AG04450 (cell line): ENCODE measurements at regions of chr3 and their contacts with region 1.

Region 1: GRCh38 chr3:190224863-190225692 is 97.2 kb downstream of the CLDN1 start:
- DNase-seq: no peak
- H3K4me3 ChIP-seq: no peak overlapping the region
- H3K27ac ChIP-seq: no peak overlapping the region
- H3K27me3 ChIP-seq: no peaks in the 10 kb centered on the region
- CTCF ChIP-seq: peak; percentile 55

Region 2: GRCh38 chr3:189967254-189967865 is 257.7 kb before region 1 on chr3:
- CTCF ChIA-PET with region 1: interaction called, 46 read pairs
- POLR2A ChIA-PET with region 1: no interaction called
- DNase-seq: peak; percentile 21
- H3K4me3 ChIP-seq: no peak overlapping the region
- H3K27ac ChIP-seq: no peak overlapping the region
- H3K27me3 ChIP-seq: no peaks in the 10 kb centered on the region
- CTCF ChIP-seq: peak; percentile 85

Region 3: DNA sequence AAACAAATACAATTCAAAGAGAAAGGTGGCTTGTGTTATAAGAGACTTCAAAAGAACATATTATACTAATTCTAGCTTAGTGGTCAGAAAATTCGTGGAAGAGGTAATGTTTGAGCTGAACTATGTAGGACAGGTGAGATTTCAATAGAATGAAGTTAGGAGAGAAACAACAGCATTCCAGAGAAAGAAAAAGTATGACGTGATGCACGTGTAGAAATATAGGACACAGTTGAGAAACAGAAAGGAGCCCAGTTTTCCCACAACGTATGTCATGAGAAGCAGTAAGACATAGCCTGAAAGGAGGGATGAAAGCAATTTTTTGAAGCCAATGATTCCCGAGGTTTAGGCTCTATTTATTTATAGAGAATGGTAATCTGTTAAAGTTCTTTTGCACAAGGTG is 85.7 kb before region 1 on chr3:
- CTCF ChIA-PET with region 1: no interaction called
- POLR2A ChIA-PET with region 1: no interaction called
- DNase-seq: no peak
- H3K4me3 ChIP-seq: no peak overlapping the region
- H3K27ac ChIP-seq: no peak overlapping the region
- H3K27me3 ChIP-seq: no peaks in the 10 kb centered on the region
- CTCF ChIP-seq: no peak

Region 4: DNA sequence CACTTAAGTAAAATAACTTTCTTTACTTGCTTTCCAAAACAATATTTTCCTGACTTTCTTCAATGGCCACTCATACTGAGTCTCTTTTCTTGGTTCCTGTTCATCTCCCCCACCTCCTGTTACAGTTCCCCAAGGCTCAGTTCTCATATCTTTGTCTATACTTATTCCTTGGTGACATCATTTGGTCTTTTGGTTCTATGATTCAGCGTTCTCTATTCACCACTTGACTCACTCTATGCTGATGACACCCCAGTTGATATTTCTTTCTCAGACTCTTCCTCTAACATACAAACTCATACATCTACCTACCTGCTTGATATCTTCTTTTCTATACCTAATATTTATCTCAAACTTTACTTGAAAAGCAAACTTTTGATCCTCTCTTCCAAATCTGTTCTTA is 19.3 kb before region 1 on chr3:
- CTCF ChIA-PET with region 1: interaction called, 19 read pairs
- POLR2A ChIA-PET with region 1: no interaction called
- DNase-seq: peak; percentile 27
- H3K4me3 ChIP-seq: no peak overlapping the region
- H3K27ac ChIP-seq: no peak overlapping the region
- H3K27me3 ChIP-seq: no peaks in the 10 kb centered on the region
- CTCF ChIP-seq: no peak

Region 5: GRCh38 chr3:190345027-190345821 is 120.1 kb after region 1 on chr3:
- CTCF ChIA-PET with region 1: interaction called, 10 read pairs
- POLR2A ChIA-PET with region 1: no interaction called
- DNase-seq: peak; percentile 85
- H3K4me3 ChIP-seq: peak overlapping the region; percentile 38
- H3K27ac ChIP-seq: peak overlapping the region; percentile 94
- H3K27me3 ChIP-seq: no peaks in the 10 kb centered on the region
- CTCF ChIP-seq: no peak

Region 6: DNA sequence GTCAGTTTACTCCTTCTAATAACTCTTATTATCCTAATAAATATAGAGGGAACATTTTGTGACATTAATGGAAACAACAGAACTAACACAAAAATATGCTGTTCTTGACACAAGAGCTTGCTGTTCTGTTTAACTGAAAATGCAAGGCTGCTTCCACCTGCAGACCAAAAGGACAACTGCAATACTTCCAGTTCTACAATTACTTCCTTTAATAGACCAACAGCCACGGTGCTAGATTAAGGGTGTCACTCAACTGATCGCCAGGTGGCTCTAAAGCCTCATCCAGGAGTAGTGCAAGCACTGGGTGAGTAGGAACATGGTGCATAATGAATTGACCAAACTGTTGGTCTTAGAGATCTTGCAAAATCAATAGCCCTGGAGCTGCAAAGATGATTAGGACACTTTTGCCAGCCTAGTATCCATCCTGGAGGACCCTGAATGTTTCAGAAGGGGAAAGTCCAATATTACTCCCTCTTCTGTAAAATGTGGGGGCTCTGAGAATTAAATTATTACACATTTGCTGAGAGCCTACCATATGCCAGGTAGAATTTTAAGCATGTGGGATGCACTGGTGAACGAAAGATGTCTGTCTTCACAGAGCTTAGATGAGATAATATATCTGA is 159.3 kb after region 1 on chr3:
- CTCF ChIA-PET with region 1: interaction called, 19 read pairs
- POLR2A ChIA-PET with region 1: no interaction called
- DNase-seq: no peak
- H3K4me3 ChIP-seq: no peak overlapping the region
- H3K27ac ChIP-seq: no peak overlapping the region
- H3K27me3 ChIP-seq: no peaks in the 10 kb centered on the region
- CTCF ChIP-seq: peak; percentile 66

Region 7: GRCh38 chr3:190424478-190425439 is 199.7 kb after region 1 on chr3:
- CTCF ChIA-PET with region 1: interaction called, 126 read pairs
- POLR2A ChIA-PET with region 1: no interaction called
- DNase-seq: peak; percentile 37
- H3K4me3 ChIP-seq: no peak overlapping the region
- H3K27ac ChIP-seq: no peak overlapping the region
- H3K27me3 ChIP-seq: no peaks in the 10 kb centered on the region
- CTCF ChIP-seq: peak; percentile 75

Region 8: DNA sequence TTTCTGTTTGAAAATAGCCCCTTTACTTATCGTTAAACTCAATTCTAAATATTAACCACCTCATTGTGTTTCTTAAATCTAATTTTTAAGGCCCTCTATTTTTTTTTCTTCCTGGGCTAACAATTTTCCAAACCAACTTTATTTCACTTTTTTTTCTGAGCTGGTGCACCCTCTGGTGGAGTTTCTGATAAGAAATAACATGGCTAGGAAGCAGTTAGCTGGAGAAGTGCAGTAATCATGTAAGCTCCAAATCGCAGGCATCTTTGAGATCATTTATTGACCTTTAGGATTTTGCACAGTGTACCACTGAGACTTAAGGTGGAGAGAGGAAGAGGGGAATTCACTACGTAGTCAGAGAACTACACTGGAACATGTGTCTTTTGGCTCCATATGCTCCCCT is 218.2 kb after region 1 on chr3:
- CTCF ChIA-PET with region 1: interaction called, 23 read pairs
- POLR2A ChIA-PET with region 1: interaction called, 3 read pairs
- DNase-seq: no peak
- H3K4me3 ChIP-seq: no peak overlapping the region
- H3K27ac ChIP-seq: no peak overlapping the region
- H3K27me3 ChIP-seq: no peaks in the 10 kb centered on the region
- CTCF ChIP-seq: peak; percentile 54